HepG2 (cell line): ENCODE measurements at regions of chr3 and their contacts with region 1.

Region 1: GRCh38 chr3:66407611-66408218 is 93.1 kb downstream of the LRIG1 start:
- DNase-seq: peak; percentile 48
- ATAC-seq: peak; percentile 92
- H3K4me3 ChIP-seq: no peak overlapping the region
- H3K27ac ChIP-seq: no peak overlapping the region
- H3K4me1 ChIP-seq: peaks cover 9% of the 10 kb centered on the region
- H3K27me3 ChIP-seq: no peaks in the 10 kb centered on the region
- CTCF ChIP-seq: peak; percentile 96
- EP300 ChIP-seq: no peak
- POLR2A ChIP-seq: no peak
- RAD21 ChIP-seq: peak; percentile 98

Region 2: GRCh38 chr3:66362541-66362941 is 45.2 kb before region 1 on chr3:
- CTCF ChIA-PET with region 1: no interaction called
- POLR2A ChIA-PET with region 1: no interaction called
- in situ Hi-C with region 1: no loop called
- intact Hi-C with region 1: no loop called
- DNase-seq: no peak
- ATAC-seq: no peak
- H3K4me3 ChIP-seq: no peak overlapping the region
- H3K27ac ChIP-seq: no peak overlapping the region
- H3K4me1 ChIP-seq: peaks cover 7% of the 10 kb centered on the region
- H3K27me3 ChIP-seq: no peaks in the 10 kb centered on the region
- CTCF ChIP-seq: no peak
- EP300 ChIP-seq: no peak
- POLR2A ChIP-seq: no peak
- RAD21 ChIP-seq: no peak

Region 3: DNA sequence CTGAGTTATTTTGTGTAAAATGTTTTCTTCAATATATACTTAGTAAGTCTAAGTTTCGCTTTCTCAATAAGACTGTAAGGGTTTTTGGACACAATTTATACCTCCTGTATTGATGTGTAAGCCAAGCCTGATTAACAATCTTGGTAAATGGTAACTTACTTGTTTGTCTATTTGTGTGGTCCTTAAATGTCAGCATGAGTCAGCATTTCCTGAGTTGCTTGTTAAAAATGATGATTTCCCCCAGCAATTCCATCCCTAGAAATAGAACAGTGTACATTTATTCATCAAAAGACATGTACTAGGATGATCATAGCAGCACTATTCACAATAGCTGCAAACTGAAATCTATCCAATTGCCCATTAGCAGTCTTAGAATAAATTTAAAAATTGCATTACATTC is 146.5 kb after region 1 on chr3:
- CTCF ChIA-PET with region 1: no interaction called
- POLR2A ChIA-PET with region 1: no interaction called
- in situ Hi-C with region 1: no loop called
- intact Hi-C with region 1: no loop called
- DNase-seq: no peak
- ATAC-seq: no peak
- H3K4me3 ChIP-seq: no peak overlapping the region
- H3K27ac ChIP-seq: no peak overlapping the region
- H3K4me1 ChIP-seq: no peaks in the 10 kb centered on the region
- H3K27me3 ChIP-seq: no peaks in the 10 kb centered on the region
- CTCF ChIP-seq: no peak
- EP300 ChIP-seq: no peak
- POLR2A ChIP-seq: no peak
- RAD21 ChIP-seq: no peak

Region 4: DNA sequence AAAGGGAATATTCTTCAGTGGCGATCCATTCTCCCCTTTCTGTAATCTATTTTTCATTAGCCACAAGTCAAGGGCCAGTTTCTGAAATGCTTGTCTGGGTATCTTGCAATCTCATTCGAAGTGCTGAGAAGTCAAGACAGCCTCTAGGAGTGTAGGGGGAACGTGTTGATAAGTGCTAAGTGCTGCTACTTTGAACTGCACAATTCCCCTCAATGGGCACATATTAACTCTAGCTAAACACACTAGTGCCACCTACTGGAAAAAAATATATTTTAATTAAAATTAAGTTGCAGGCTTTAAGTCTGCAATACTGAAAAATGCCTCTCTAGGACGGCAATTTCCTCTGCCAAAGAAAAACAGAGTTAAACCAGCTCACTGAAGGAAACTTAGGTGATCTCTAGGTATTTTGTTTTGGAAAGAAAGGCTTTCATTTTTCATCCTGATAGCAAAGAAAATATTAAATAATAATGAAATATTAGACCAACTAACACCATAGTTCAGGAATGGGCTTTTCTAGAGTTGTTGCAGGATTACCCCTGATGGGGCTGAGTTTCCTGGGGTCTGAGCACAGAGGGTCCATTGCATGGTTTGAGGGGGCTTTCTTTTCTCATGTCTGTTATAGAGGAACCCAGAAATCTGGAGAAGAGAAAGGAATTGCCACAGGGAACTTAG is 408.5 kb after region 1 on chr3:
- CTCF ChIA-PET with region 1: interaction called, 13 read pairs
- POLR2A ChIA-PET with region 1: no interaction called
- in situ Hi-C with region 1: loop called (anchors 5 kb)
- intact Hi-C with region 1: loop called (anchors 1 kb)
- DNase-seq: peak; percentile 36
- ATAC-seq: peak; percentile 82
- H3K4me3 ChIP-seq: no peak overlapping the region
- H3K27ac ChIP-seq: no peak overlapping the region
- H3K4me1 ChIP-seq: peaks cover 23% of the 10 kb centered on the region
- H3K27me3 ChIP-seq: no peaks in the 10 kb centered on the region
- CTCF ChIP-seq: peak; percentile 65
- EP300 ChIP-seq: no peak
- POLR2A ChIP-seq: no peak
- RAD21 ChIP-seq: peak; percentile 53; the same call in 1 of the 2 replicates